ENCODE measurements at regions of chr10 and their contacts with region 1.

Region 1: DNA sequence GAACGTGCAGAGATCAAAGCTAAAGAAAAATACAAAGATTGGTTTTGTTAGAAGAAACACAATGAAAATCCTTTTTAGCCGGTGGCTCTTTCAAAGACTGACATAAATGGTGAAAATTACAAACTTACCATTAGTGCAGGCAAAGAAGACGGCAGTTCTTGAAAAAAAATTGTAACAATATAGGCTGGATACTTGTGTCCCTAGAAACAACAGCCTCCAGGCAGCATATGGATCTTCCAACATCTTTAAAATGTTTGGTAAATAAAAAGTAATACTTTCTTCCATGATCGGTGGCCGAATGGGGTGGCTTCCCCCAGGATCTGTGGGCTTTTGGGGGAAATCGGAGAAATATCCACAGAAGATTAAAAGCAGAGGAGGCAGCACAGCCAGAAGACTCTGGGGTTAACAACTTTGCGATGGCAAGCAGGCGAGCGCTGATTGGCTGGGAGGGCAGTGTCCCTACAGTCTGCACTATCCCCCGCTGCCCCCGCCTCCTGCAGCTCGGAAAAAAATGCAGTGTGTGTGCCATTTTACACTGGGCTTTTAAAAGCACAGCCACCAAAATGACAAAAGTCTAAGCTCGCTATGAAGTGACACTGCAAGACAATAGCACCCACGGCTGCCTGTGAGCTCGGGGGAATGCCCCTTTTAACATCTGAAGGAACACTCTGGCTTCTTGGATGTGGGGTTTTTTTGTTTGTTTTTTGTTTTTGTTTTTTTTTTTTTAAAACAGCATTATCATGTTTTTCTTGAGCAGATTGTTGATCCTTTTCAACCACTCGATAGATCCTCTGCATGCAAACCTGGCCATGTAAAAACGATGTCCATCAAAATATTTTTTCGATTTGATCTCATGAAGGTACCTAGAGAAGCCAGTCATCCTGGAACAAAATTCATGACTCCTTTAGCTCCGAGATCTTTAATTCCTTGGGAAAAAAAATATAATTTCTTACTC is 31.7 kb upstream of the EPC1 start:
- DNase-seq: peak; percentile 87 to 95
- ATAC-seq: peak; percentile 90 to 98 (median 95)
- H3K4me3 ChIP-seq: peak overlapping the region; percentile 97
- H3K4me3 Mint-ChIP-seq: no peak overlapping the region
- H3K27ac ChIP-seq: peak overlapping the region; percentile 82
- H3K27ac Mint-ChIP-seq: no peak overlapping the region
- H3K4me1 ChIP-seq: peaks cover 3% of the 10 kb centered on the region
- H3K4me1 Mint-ChIP-seq: peaks cover 27 to 32% of the 10 kb centered on the region in 2 donors
- H3K27me3 ChIP-seq: no peaks in the 10 kb centered on the region
- H3K27me3 Mint-ChIP-seq: no peaks in the 10 kb centered on the region
- CTCF ChIP-seq: no peak

Region 2: GRCh38 chr10:32055813-32056600 is 322.6 kb before region 1 on chr10 and contains the start of gene KIF5B:
- intact Hi-C with region 1: loop called (anchors 10 kb)
- DNase-seq: peak; percentile 88 to 95
- ATAC-seq: peak; percentile 78 to 88 (median 82)
- H3K4me3 ChIP-seq: peak within 1 kb of the TSS; percentile 98
- H3K4me3 Mint-ChIP-seq: peak within 1 kb of the TSS; percentile 98
- H3K27ac ChIP-seq: peak within 1 kb of the TSS; percentile 89
- H3K27ac Mint-ChIP-seq: peak within 1 kb of the TSS; percentile 93 to 98
- H3K4me1 ChIP-seq: peaks cover 14% of the 10 kb centered on the region
- H3K4me1 Mint-ChIP-seq: peaks cover 56 to 59% of the 10 kb centered on the region in 2 donors
- H3K27me3 ChIP-seq: no peaks in the 10 kb centered on the region
- H3K27me3 Mint-ChIP-seq: no peaks in the 10 kb centered on the region
- CTCF ChIP-seq: no peak
- total RNA-seq, gene KIF5B: 51.0 to 64.2 (median 61.1) TPM

Region 3: GRCh38 chr10:32332299-32332750 is 46.3 kb before region 1 on chr10:
- intact Hi-C with region 1: loop called (anchors 1 kb)
- DNase-seq: peak; percentile 67 to 90
- ATAC-seq: peak; percentile 95 to 98 (median 96)
- H3K4me3 ChIP-seq: no peak overlapping the region
- H3K4me3 Mint-ChIP-seq: peak overlapping the region; percentile 62
- H3K27ac ChIP-seq: peak overlapping the region; percentile 75
- H3K27ac Mint-ChIP-seq: peak overlapping the region; percentile 67 to 93
- H3K4me1 ChIP-seq: peaks cover 40% of the 10 kb centered on the region
- H3K4me1 Mint-ChIP-seq: peaks cover 82 to 95% of the 10 kb centered on the region in 2 donors
- H3K27me3 ChIP-seq: no peaks in the 10 kb centered on the region
- H3K27me3 Mint-ChIP-seq: no peaks in the 10 kb centered on the region
- CTCF ChIP-seq: no peak

Region 4: DNA sequence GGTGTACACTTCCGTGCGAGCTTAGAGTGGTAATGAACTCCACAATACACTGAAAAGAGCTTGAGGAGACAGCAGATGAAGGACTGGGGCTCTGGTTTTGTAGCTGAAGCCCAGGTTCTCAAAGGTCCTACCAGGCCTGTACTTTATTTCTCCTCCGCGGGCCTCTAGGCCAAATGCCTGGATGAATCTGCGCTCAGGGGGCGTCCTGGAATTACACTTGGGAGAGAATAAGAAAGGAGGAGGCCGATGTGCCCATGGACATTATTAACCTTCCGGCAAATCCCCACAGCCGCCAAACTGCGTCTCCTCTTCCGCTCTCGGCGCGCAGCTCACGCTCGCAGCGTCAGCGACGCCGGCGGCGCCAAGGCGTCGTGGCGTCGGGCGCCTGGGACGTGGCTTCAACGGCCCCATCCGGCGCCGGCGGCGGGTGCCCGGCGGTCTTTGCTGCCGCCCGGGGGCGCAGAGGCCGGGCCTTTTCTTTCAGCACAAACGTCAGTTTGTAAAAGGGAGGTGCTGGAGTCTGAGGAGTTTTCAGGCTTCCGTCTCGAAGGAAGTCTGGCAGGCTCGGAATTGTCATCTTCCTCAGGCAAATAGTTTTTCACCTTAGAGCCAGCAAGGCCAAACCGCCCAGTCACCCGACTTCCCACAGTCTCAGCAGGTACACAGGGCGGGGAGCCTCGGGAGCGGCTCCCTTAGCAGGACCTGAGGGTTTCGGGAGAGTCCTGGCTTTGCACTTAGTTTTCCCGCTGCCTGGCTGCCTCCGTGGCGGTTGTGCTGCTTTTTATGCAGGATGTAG is 67.3 kb after region 1 on chr10 and contains the start of gene CCDC7:
- intact Hi-C with region 1: loop called (anchors 2 kb)
- DNase-seq: peak; percentile 81 to 96
- ATAC-seq: peak; percentile 96 to 98 (median 97)
- H3K4me3 ChIP-seq: peak within 1 kb of the TSS; percentile 83
- H3K4me3 Mint-ChIP-seq: peak within 1 kb of the TSS; percentile 87
- H3K27ac ChIP-seq: peak within 1 kb of the TSS; percentile 100
- H3K27ac Mint-ChIP-seq: peak within 1 kb of the TSS; percentile 83 to 98
- H3K4me1 ChIP-seq: peaks cover 3% of the 10 kb centered on the region
- H3K4me1 Mint-ChIP-seq: peaks cover 14 to 21% of the 10 kb centered on the region in 2 donors
- H3K27me3 ChIP-seq: no peaks in the 10 kb centered on the region
- H3K27me3 Mint-ChIP-seq: peaks cover 9 to 24% of the 10 kb centered on the region in 2 donors
- CTCF ChIP-seq: peak; percentile 54
- total RNA-seq, gene CCDC7: 39.0 to 51.1 (median 42.8) TPM